Activated CD4-positive, alpha-beta memory T cell treated with anti-CD3 and anti-CD28 coated beads, Interleukin-2, amount 10 ng/mL, durations not matched to agents 7 days and 5 days (primary cell): ENCODE measurements at regions of chr13 and their contacts with region 1.

Region 1: DNA sequence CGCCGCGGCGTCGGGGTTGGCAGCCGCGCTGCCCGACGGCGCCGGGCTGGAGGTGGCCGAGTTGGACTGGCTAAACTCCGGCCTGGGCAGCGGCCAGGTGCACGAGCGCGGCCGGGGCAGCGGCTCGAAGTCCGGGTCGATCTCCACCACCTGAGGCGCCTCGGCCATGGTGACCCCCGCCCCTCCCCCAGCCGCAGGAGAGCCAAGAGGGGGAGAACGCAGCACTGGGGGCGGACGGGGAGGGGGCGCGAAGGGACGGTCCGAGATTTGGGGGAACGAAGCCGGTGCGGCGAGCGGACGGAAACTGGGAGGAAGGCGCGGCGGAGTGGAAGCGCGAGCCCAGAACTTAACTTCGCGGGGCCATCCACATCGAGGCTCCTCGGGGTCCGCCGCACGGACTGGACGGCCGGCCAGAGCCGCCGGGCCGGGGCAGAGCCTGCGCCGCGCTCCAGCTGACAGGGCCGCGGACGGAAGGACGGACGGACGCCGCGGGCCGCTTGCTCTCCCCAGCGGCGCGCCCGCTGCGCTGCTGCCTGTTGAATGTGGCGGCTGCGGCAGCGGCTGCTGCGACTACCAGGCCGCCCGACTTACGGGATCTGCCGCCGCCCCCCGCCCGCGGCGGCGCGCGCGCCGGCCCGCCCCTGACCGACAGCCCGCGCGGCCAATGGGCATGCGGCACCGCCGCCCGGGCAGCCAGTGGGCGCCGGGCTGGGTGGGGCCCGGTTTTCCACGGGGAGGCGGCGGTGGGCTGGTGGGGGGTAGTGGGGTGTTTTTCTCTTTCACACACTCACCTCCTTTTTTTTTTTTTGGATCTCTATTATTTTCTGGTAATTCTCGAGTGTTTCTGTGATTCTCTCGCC is at the start of gene FOXO1:
- DNase-seq: peak; percentile 92
- H3K4me3 Mint-ChIP-seq: peak within 1 kb of the TSS; percentile 92
- H3K27ac Mint-ChIP-seq: peak within 1 kb of the TSS; percentile 90
- H3K4me1 Mint-ChIP-seq: peaks cover 39% of the 10 kb centered on the region
- H3K27me3 Mint-ChIP-seq: no peaks in the 10 kb centered on the region
- total RNA-seq, gene FOXO1: 31.6 to 32.2 TPM

Region 2: GRCh38 chr13:40388617-40389016 is 277.7 kb before region 1 on chr13:
- CTCF ChIA-PET with region 1: interaction called, 3 read pairs
- POLR2A ChIA-PET with region 1: interaction called, 44 read pairs
- DNase-seq: peak; percentile 92
- H3K4me3 Mint-ChIP-seq: peak overlapping the region; percentile 70
- H3K27ac Mint-ChIP-seq: peak overlapping the region; percentile 90
- H3K4me1 Mint-ChIP-seq: peaks cover 40% of the 10 kb centered on the region
- H3K27me3 Mint-ChIP-seq: no peaks in the 10 kb centered on the region

Region 3: DNA sequence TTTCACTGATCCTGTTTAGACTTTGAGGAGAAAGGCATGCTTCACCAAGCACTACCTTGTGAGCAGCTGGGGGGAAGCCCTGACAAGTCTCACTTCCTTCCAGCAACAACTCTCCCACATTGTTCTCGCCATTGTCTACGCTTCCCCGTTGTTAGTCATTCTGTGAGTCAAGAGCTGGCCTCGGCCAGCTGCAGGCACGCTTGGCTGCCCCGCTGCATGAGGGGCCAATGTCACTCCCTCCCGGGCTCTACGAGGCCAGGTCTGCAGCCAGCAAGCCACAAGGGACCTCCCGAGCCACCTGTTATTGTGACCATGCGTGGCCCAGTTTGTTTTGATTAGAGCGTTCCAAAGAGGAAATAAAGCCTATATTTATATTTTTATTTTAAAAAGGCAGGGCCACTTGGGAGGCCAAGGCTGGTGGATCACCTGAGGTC is 220.7 kb before region 1 on chr13:
- CTCF ChIA-PET with region 1: no interaction called
- POLR2A ChIA-PET with region 1: no interaction called
- DNase-seq: peak; percentile 18
- H3K4me3 Mint-ChIP-seq: no peak overlapping the region
- H3K27ac Mint-ChIP-seq: no peak overlapping the region
- H3K4me1 Mint-ChIP-seq: peaks cover 19% of the 10 kb centered on the region
- H3K27me3 Mint-ChIP-seq: no peaks in the 10 kb centered on the region

Region 4: GRCh38 chr13:40596484-40596883 is 69.8 kb before region 1 on chr13:
- CTCF ChIA-PET with region 1: interaction called, 5 read pairs
- POLR2A ChIA-PET with region 1: interaction called, 14 read pairs
- DNase-seq: no peak
- H3K4me3 Mint-ChIP-seq: peak overlapping the region; percentile 29
- H3K27ac Mint-ChIP-seq: peak overlapping the region; percentile 50
- H3K4me1 Mint-ChIP-seq: peaks cover 68% of the 10 kb centered on the region
- H3K27me3 Mint-ChIP-seq: no peaks in the 10 kb centered on the region

Region 5: DNA sequence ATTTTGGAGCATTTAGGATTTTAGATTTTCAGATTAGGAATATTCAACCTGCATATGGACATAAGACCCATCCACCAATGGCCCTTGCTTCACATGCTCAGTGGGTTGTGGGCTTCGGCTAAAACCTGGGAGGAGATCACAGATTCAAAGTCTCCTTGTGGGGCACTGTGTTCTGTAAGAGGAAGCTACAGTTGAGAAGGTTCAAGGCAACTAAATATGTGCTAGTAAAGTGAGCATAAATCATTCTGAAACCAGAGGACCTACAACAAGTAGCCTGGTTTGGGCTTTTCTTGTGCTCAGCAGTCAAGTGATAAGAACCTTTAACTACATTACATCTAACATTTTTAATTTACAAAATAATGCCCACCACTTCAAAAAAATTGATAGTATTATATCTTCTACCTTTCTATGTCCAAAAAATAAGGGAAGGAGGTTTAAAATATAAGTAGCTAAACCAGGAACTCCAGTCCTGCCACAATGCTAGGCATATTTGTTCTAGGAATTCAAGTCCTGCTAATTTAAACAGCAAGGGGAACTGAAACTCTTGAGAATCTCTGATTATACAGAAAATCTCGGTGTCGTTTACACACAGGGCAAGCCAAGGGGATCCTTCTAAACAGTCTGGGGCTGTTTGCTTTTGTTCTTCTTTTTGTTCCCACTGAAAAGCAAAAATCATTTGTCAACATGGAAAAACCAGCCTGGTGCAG is 36.4 kb before region 1 on chr13:
- CTCF ChIA-PET with region 1: no interaction called
- POLR2A ChIA-PET with region 1: interaction called, 26 read pairs
- DNase-seq: no peak
- H3K4me3 Mint-ChIP-seq: no peak overlapping the region
- H3K27ac Mint-ChIP-seq: peak overlapping the region; percentile 58
- H3K4me1 Mint-ChIP-seq: peaks cover 69% of the 10 kb centered on the region
- H3K27me3 Mint-ChIP-seq: no peaks in the 10 kb centered on the region

Region 6: DNA sequence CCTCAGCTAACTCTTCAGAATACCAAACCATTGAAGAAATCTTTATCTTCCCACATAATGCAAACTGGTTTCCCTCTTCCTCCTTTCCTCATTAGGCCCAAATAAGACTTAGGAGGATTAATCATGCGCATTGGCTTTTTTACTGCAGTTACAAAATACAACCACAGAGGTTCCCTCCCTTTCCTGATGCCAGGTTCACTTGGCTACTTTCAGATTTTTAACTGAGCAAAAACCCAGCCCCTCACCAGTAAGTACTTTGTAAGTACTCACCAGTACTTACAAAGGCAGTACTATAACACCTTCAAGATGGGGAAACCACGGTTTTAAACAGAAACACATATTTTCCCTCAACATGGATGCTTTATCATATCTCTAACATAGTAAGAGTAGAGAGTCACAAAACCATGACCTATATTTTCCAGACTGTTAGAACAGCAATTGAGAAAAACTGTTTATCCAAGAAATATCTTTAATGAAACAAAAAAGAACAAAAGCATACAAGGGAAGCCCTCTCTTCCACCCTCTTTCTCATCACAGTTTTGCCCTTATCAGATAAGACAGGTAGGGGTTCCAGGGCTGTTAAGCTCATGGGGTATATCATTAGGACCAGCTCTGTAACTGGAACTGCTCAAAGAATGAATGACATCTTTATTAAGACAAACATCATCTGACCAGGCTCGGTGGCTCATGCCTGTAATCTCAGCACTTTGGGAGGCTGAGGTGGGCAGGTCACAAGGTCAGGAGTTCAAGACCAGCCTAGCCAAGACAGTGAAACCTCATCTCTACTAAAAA is 12.6 kb before region 1 on chr13:
- CTCF ChIA-PET with region 1: interaction called, 12 read pairs
- POLR2A ChIA-PET with region 1: interaction called, 101 read pairs
- DNase-seq: no peak
- H3K4me3 Mint-ChIP-seq: peak overlapping the region; percentile 71
- H3K27ac Mint-ChIP-seq: peak overlapping the region; percentile 93
- H3K4me1 Mint-ChIP-seq: peaks cover 88% of the 10 kb centered on the region
- H3K27me3 Mint-ChIP-seq: no peaks in the 10 kb centered on the region

Region 7: DNA sequence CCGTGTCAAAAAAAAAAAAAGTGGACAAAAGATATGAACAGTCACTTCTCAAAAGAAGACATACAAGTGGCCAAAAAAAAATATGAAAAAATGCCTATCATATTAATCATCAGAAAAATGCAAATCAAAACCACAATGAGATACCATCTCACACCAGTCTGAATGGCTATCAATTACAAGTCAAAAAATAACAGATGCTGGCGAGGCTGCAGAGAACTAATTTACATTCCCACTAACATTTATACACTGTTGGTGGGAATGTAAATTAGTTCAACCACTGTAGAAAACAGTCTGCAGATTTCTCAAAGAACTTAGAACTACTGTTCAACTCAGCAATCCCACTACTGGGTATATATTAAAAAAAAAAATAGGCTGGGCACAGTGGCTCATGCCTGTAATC is 26.7 kb after region 1 on chr13:
- CTCF ChIA-PET with region 1: no interaction called
- POLR2A ChIA-PET with region 1: no interaction called
- DNase-seq: no peak
- H3K4me3 Mint-ChIP-seq: no peak overlapping the region
- H3K27ac Mint-ChIP-seq: no peak overlapping the region
- H3K4me1 Mint-ChIP-seq: no peaks in the 10 kb centered on the region
- H3K27me3 Mint-ChIP-seq: no peaks in the 10 kb centered on the region

Region 8: GRCh38 chr13:40777166-40777808 is 111.0 kb after region 1 on chr13:
- CTCF ChIA-PET with region 1: interaction called, 18 read pairs
- POLR2A ChIA-PET with region 1: interaction called, 10 read pairs
- DNase-seq: peak; percentile 56
- H3K4me3 Mint-ChIP-seq: peak overlapping the region; percentile 66
- H3K27ac Mint-ChIP-seq: peak overlapping the region; percentile 99
- H3K4me1 Mint-ChIP-seq: peaks cover 38% of the 10 kb centered on the region
- H3K27me3 Mint-ChIP-seq: no peaks in the 10 kb centered on the region